ENCODE measurements at regions of chr18 and their contacts with region 1.

Region 1: GRCh38 chr18:49858309-49859020 is 45.1 kb upstream of the ACAA2 start:
- DNase-seq: peak; percentile 73

Region 2: GRCh38 chr18:48675352-48675761 is 1183.1 kb before region 1 on chr18:
- in situ Hi-C with region 1: loop called (anchors 25 kb)
- DNase-seq: peak; percentile 87

Region 3: DNA sequence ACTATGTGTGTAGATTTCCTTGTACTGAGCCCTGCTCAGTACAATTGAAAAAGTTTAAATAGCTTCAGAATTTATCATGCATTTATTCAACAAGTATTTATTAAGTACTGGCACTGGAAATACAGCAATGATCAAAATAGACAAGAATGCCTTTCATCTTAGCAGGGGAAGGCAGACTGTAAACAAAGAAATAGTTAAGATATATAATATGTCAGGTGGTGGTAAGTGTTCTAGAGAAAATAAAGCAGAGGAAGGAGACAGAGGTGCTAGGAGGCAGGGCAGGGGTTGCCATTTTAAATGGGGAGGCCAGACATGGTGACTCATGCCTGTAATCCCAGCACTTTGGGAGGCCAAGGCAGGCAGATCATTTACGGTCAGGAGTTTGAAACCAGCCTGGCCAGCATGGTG is 310.2 kb before region 1 on chr18:
- in situ Hi-C with region 1: loop called (anchors 25 kb)
- DNase-seq: no peak

Region 4: GRCh38 chr18:50231621-50232020 is 373.2 kb after region 1 on chr18:
- in situ Hi-C with region 1: no loop called
- DNase-seq: no peak

Region 5: GRCh38 chr18:50559752-50560680 is 701.6 kb after region 1 on chr18 and contains the start of gene MAPK4:
- in situ Hi-C with region 1: no loop called
- DNase-seq: peak; percentile 24

Measured in KBM-7 (cell line).